Endothelial cell of umbilical vein (primary cell): ENCODE measurements at regions of chr20 and their contacts with region 1.

Region 1: DNA sequence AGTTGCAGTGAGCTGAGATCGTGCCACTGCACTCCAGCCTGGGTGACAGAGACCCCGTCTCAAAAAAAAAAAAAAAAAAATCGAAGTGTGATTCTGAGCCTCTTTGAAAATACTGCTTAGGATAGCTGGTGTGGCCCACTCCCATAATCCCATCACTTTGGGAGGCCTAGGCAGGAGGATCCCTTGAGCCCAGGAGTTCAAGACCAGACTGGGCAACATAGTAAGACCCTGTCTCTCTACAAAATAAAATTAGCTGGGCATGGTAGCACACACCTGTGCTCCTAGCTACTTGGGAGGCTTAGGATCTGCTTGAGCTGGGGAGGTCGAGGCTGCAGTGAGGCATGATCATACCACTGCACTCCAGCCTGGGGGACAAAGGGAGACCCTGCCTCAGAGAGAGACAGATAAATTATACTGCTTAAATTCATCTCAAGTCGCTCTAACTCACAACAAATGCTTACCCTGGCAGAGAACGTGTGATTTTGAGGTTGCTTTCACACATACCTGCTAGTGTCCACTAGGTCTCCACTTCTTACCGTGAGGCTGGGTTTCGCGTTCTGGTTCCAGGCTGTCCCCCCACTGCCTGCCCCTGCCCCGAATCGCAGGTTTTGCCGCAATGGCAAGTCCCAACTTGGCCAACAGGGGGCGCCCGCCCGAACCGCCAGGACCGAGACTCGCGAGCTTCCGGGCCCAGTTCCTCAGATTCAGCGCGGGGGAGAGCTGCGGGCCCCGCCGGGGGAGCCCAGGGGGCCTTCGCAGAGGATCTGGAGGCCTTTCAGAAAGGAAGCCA is 12.3 kb upstream of the TMC2 start:
- DNase-seq: peak; percentile 81
- H3K4me3 ChIP-seq: peak overlapping the region; percentile 55 to 84 (median 63)
- H3K27ac ChIP-seq: peak overlapping the region; percentile 73
- H3K4me1 ChIP-seq: peaks cover 6% of the 10 kb centered on the region
- H3K27me3 ChIP-seq: peaks cover 0 to 13% of the 10 kb centered on the region in 2 experiments
- CTCF ChIP-seq: peak; percentile 95 to 99
- POLR2A ChIP-seq: no peak

Region 2: GRCh38 chr20:1802385-1803060 is 721.6 kb before region 1 on chr20:
- CTCF ChIA-PET with region 1: no interaction called
- POLR2A ChIA-PET with region 1: no interaction called
- dilution Hi-C with region 1: no loop called
- intact Hi-C with region 1: no loop called
- DNase-seq: peak; percentile 76
- H3K4me3 ChIP-seq: peak overlapping the region; percentile 49 to 66 (median 56)
- H3K27ac ChIP-seq: peak overlapping the region; percentile 42
- H3K4me1 ChIP-seq: peaks cover 13% of the 10 kb centered on the region
- H3K27me3 ChIP-seq: peaks cover 3 to 5% of the 10 kb centered on the region in 2 experiments
- CTCF ChIP-seq: peak; percentile 64 to 84
- POLR2A ChIP-seq: no peak

Region 3: GRCh38 chr20:2470423-2471193 is 53.5 kb before region 1 on chr20 and contains the start of gene SNRPB:
- CTCF ChIA-PET with region 1: interaction called, 16 read pairs
- POLR2A ChIA-PET with region 1: interaction called, 4 read pairs
- dilution Hi-C with region 1: no loop called
- intact Hi-C with region 1: loop called (anchors 1 kb)
- DNase-seq: peak; percentile 98
- H3K4me3 ChIP-seq: peak within 1 kb of the TSS; percentile 87 to 98 (median 91)
- H3K27ac ChIP-seq: peak within 1 kb of the TSS; percentile 86
- H3K4me1 ChIP-seq: peaks cover 17% of the 10 kb centered on the region
- H3K27me3 ChIP-seq: no peaks in the 10 kb centered on the region
- CTCF ChIP-seq: no peak
- POLR2A ChIP-seq: peak; percentile 98
- total RNA-seq, gene SNRPB: 296 and 323 TPM in 2 replicates

Region 4: DNA sequence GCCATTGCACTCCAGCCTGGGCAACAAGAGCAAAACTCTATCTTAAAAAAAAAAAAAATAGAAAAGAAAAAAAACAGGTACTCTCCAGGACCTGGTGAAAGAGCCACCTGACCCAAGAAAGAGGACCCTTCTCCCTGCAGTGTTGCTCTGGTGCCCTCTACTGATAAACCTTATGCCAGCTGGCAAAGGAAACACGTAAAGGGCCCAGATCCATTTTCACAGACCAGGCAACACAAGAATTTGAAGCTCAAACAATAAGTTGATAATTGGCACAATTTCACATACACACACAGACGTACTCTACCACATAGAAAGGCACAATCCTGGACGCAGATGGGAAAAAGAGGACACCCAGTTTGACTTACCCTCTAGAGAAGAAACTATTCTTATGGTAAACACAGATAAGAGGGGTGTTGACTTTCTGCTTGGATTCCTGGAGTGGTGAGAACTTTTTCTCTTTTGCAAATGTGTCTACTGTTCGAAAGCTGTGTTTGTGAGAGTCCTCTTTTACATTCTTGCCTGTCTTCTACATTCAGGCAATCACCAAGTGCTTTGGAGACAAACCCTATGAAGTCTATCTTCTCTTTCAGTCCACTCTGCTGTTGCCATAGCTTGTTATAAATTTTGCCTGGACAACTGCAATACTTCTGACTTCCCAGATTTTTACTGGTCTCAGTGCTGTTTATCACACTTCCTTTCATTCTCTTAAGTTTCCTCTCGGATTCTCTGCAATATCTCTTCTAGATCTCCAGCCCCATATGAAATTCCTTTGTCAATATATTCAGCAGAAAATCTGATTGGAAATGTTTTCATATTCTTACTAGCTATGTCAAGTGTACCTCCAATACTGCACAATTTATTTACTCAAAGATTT is 47.1 kb before region 1 on chr20:
- CTCF ChIA-PET with region 1: interaction called, 14 read pairs
- POLR2A ChIA-PET with region 1: no interaction called
- dilution Hi-C with region 1: no loop called
- intact Hi-C with region 1: no loop called
- DNase-seq: peak; percentile 66
- H3K4me3 ChIP-seq: no peak overlapping the region
- H3K27ac ChIP-seq: peak overlapping the region; percentile 52
- H3K4me1 ChIP-seq: peaks cover 11% of the 10 kb centered on the region
- H3K27me3 ChIP-seq: no peaks in the 10 kb centered on the region
- CTCF ChIP-seq: peak; percentile 13 to 14
- POLR2A ChIP-seq: no peak

Region 5: DNA sequence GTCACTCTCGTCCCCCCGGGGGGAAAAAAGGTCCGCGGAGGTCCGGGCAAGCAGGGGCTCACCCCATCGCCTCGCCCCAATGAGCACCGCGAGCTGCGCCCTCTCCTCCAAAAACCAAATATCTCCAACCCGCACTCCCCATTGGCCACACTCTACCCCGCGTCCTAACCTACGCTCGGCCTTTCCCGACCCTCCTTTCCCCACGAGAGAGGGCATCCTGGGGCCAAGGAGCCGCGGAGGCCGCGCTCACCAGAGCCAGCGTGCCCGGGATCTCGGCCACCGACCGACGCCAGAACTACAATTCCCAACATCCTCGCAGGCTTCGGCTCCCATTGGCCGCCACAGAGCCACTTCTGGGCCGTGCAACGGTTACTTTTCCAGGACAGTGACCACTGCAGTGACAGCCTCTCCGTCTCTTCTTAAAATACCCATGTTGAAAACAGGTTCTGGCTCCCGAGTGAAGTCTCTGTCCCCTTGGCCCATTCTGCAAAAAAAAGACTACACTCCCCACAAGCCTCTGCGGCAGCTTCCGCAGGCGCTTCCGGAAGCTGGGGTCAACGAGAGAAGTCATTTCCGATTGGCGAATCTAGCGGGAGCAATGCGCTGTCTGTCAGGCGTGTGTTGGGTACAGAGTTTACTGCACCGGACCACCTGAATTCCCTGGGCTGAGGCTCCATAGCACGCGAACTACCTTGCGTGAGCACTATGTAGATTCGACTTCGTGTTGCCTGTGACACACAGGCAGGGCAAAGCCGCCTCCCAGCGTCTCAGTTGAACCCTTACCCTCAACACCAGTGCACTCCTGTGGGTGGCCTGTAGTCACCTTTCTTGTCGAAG is 15.3 kb before region 1 on chr20 and contains the start of gene ZNF343:
- CTCF ChIA-PET with region 1: interaction called, 99 read pairs
- POLR2A ChIA-PET with region 1: interaction called, 4 read pairs
- dilution Hi-C with region 1: no loop called
- intact Hi-C with region 1: loop called (anchors 1 kb)
- DNase-seq: peak; percentile 90
- H3K4me3 ChIP-seq: peak within 1 kb of the TSS; percentile 73 to 85 (median 77)
- H3K27ac ChIP-seq: peak within 1 kb of the TSS; percentile 46
- H3K4me1 ChIP-seq: peaks cover 10% of the 10 kb centered on the region
- H3K27me3 ChIP-seq: no peaks in the 10 kb centered on the region
- CTCF ChIP-seq: no peak
- POLR2A ChIP-seq: peak; percentile 86
- total RNA-seq, gene ZNF343: 7.9 and 9.2 TPM in 2 replicates

Region 6: GRCh38 chr20:2538931-2539720 is 15.0 kb after region 1 on chr20:
- CTCF ChIA-PET with region 1: interaction called, 19 read pairs
- POLR2A ChIA-PET with region 1: no interaction called
- dilution Hi-C with region 1: no loop called
- intact Hi-C with region 1: no loop called
- DNase-seq: no peak
- H3K4me3 ChIP-seq: no peak overlapping the region
- H3K27ac ChIP-seq: no peak overlapping the region
- H3K4me1 ChIP-seq: no peaks in the 10 kb centered on the region
- H3K27me3 ChIP-seq: peaks cover 5 to 6% of the 10 kb centered on the region in 2 experiments
- CTCF ChIP-seq: no peak
- POLR2A ChIP-seq: no peak

Region 7: DNA sequence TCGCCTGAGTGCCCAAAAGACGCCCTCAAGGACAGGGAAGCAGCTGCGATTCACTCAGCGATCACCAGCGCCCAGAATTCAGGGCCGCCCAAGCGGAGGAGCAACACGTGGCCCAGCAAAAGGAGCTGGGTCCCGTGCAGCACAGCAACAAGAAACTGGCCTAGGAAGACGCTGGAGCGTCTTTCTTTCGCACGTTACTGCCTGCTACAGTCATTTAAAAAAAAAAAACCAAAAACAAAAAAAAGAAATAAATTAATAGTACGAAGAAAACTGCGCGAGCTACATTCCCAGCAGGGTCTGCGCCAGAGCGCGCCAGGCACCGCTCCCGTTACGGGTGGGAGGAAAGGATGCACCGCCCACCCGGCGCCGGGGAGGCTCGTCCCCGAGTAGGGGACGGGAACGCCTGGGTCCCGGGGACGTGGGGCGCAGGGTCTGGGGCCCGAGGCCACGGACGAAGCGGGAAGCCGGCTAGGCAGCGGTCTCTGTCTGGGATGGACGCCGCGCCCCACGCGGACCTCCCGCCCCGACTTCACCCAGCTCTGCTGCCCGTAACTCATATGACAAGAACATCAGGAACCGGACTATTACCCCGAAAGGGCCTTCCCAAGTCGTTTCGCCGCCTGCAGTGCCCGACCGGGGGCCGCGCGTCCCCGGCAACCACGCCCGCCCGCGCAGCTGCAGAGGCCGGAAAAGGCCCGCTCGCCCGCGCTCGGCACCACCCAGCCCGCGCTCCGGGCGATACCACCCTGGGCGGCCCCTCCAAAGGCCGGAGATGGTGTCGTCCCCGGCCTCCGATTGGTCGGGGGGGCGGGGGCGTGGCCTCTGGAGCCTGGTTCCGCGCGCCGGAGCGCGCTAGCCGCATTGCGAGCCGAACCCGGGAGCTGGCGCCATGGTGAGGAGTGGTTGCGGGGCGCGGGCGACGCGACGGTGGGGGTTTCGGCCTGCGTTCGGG is 127.9 kb after region 1 on chr20 and contains the start of gene NOP56:
- CTCF ChIA-PET with region 1: interaction called, 38 read pairs
- POLR2A ChIA-PET with region 1: no interaction called
- dilution Hi-C with region 1: no loop called
- intact Hi-C with region 1: loop called (anchors 1 kb)
- DNase-seq: peak; percentile 86
- H3K4me3 ChIP-seq: peak within 1 kb of the TSS; percentile 94 to 98 (median 96)
- H3K27ac ChIP-seq: peak within 1 kb of the TSS; percentile 51
- H3K4me1 ChIP-seq: peaks cover 25% of the 10 kb centered on the region
- H3K27me3 ChIP-seq: no peaks in the 10 kb centered on the region
- CTCF ChIP-seq: no peak
- POLR2A ChIP-seq: peak; percentile 92
- total RNA-seq, gene NOP56: 305 and 329 TPM in 2 replicates

Region 8: GRCh38 chr20:2673453-2673852 is 149.3 kb after region 1 on chr20:
- CTCF ChIA-PET with region 1: interaction called, 14 read pairs
- POLR2A ChIA-PET with region 1: no interaction called
- dilution Hi-C with region 1: no loop called
- intact Hi-C with region 1: no loop called
- DNase-seq: no peak
- H3K4me3 ChIP-seq: no peak overlapping the region
- H3K27ac ChIP-seq: no peak overlapping the region
- H3K4me1 ChIP-seq: no peaks in the 10 kb centered on the region
- H3K27me3 ChIP-seq: peaks cover 12 to 14% of the 10 kb centered on the region in 2 experiments
- CTCF ChIP-seq: no peak
- POLR2A ChIP-seq: no peak